Activated CD4-positive, alpha-beta T cell treated with anti-CD3 and anti-CD28 coated beads, Interleukin-2, amount 10 ng/mL, durations not matched to agents 7 days and 5 days (primary cell): ENCODE measurements at regions of chr16 and their contacts with region 1.

Region 1: GRCh38 chr16:67816240-67817031 is 9.7 kb downstream of the TSNAXIP1 start:
- DNase-seq: peak; percentile 90
- H3K4me3 Mint-ChIP-seq: no peak overlapping the region
- H3K27ac Mint-ChIP-seq: no peak overlapping the region
- H3K4me1 Mint-ChIP-seq: peaks cover 7% of the 10 kb centered on the region
- H3K27me3 Mint-ChIP-seq: no peaks in the 10 kb centered on the region

Region 2: GRCh38 chr16:67781565-67781921 is 34.9 kb before region 1 on chr16:
- CTCF ChIA-PET with region 1: interaction called, 23 read pairs
- POLR2A ChIA-PET with region 1: no interaction called
- DNase-seq: peak; percentile 58
- H3K4me3 Mint-ChIP-seq: no peak overlapping the region
- H3K27ac Mint-ChIP-seq: peak overlapping the region; percentile 86
- H3K4me1 Mint-ChIP-seq: peaks cover 36% of the 10 kb centered on the region
- H3K27me3 Mint-ChIP-seq: no peaks in the 10 kb centered on the region

Region 3: DNA sequence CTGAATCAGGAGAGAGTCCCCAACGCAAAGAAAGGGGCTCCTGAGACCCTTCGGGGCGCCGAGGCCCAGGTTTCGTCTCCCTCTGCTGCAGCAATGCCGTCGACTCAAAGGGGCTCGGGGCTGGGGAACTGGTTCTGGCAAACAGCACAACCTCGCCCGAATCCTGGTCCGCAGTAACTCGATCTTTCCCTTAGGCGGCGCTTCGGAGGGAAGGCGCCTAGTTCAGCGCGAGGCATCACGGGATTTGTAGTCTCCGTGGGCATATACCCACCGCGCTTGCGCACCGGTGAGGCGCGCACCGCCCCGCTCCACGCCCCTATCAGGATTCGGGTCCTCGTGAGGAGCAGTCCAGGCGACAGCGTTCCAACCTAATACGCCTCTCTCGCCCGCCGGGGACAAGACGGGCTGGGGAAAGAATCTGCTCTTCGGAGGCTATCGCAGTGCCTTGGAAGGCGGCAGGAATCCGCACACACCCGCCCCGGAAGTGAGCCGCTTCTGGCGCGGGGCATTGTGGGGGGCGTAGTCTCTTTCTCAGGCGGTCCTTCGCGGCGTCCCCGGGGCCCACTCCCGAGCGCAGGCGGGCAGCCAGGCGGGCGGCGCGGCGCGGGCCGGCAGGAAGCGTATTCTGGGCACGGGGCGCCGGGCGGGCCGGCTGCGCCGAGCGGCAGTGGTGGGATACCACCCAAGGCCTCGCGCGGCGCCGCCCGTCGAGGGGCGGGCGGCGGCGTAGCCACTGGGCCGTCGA is 25.5 kb after region 1 on chr16 and contains the start of gene THAP11:
- CTCF ChIA-PET with region 1: interaction called, 15 read pairs
- POLR2A ChIA-PET with region 1: no interaction called
- DNase-seq: peak; percentile 97
- H3K4me3 Mint-ChIP-seq: peak within 1 kb of the TSS; percentile 91
- H3K27ac Mint-ChIP-seq: peak within 1 kb of the TSS; percentile 98
- H3K4me1 Mint-ChIP-seq: peaks cover 40% of the 10 kb centered on the region
- H3K27me3 Mint-ChIP-seq: no peaks in the 10 kb centered on the region
- total RNA-seq, gene THAP11: 37.5 to 41.7 TPM

Region 4: DNA sequence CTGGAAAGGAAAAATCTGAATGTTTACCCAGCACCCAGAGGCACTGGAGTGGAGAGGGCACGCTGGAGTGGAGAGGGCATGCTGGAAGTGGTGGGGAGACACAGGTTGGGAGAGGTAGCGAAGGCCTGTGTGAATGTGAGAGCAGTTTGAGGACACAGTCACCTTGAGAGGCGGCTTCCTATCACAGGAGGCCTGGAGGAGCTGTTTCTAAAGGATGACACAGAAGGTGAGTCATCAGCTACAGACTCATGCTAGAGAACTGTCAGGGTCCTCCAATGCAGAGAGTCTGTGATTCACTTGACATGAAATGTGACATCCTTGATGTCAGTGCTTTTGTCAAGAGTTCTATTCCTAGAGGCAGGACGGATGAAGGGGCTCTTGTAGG is 101.4 kb after region 1 on chr16:
- CTCF ChIA-PET with region 1: interaction called, 12 read pairs
- POLR2A ChIA-PET with region 1: no interaction called
- DNase-seq: no peak
- H3K4me3 Mint-ChIP-seq: no peak overlapping the region
- H3K27ac Mint-ChIP-seq: peak overlapping the region; percentile 1
- H3K4me1 Mint-ChIP-seq: peaks cover 24% of the 10 kb centered on the region
- H3K27me3 Mint-ChIP-seq: no peaks in the 10 kb centered on the region

Region 5: GRCh38 chr16:68064791-68065365 is 248.4 kb after region 1 on chr16:
- CTCF ChIA-PET with region 1: interaction called, 13 read pairs
- POLR2A ChIA-PET with region 1: no interaction called
- DNase-seq: peak; percentile 81
- H3K4me3 Mint-ChIP-seq: no peak overlapping the region
- H3K27ac Mint-ChIP-seq: peak overlapping the region; percentile 89
- H3K4me1 Mint-ChIP-seq: peaks cover 84% of the 10 kb centered on the region
- H3K27me3 Mint-ChIP-seq: no peaks in the 10 kb centered on the region